Activated T-helper 1 cell treated with anti-CD3 and anti-CD28 coated beads, Interleukin-12 subunit alpha, Interleukin-12 subunit beta, Interleukin-2, Interleukin-4 antibody, amounts not matched to agents 30 ng/mL and 10 ng/mL and 1 ng/mL, durations not matched to agents 14 hours and 24 hours and 36 hours (primary cell): ENCODE measurements at regions of chr9 and their contacts with region 1.

Region 1: DNA sequence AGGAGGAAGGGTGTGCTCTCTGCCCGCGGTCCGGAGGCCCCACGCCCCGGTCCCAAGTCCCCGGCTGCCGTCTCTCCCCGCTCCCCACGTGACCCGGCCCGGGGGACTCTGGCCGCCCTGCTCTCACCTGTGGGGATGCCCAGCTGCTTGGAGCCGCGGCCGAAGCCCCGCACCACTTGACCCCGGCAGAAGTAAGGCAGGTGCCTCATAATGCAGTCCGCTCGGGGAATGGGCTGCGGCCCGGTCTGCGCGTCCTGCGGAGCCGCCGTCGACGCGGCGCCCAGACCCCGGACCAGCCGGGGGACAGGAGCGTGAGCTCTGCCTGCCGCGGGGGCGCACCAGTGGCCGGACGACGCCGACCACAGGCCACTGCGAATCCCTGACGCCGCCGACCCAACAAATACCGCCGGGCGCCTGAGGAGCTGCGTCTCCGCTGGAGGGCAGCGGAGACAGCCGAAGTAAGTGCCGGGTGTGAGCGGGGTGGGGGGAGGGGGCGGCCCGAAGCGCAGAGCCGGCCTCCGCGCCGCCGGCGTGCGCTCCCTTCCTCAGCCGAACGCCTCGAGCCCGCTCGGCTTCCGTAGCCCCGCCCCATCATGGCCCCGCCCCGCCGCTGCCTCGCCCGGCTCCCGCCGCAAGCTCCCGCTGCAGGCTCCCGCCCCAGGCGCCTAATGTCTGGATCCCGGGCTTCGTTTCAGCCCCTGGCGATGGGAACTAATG is at the start of gene RFK:
- DNase-seq: peak; percentile 89
- H3K4me3 Mint-ChIP-seq: peak within 1 kb of the TSS; percentile 97
- H3K27ac Mint-ChIP-seq: peak within 1 kb of the TSS; percentile 99
- H3K4me1 Mint-ChIP-seq: peaks cover 34% of the 10 kb centered on the region
- H3K27me3 Mint-ChIP-seq: no peaks in the 10 kb centered on the region
- total RNA-seq, gene RFK: 20.3 and 20.8 TPM in 2 replicates

Region 2: DNA sequence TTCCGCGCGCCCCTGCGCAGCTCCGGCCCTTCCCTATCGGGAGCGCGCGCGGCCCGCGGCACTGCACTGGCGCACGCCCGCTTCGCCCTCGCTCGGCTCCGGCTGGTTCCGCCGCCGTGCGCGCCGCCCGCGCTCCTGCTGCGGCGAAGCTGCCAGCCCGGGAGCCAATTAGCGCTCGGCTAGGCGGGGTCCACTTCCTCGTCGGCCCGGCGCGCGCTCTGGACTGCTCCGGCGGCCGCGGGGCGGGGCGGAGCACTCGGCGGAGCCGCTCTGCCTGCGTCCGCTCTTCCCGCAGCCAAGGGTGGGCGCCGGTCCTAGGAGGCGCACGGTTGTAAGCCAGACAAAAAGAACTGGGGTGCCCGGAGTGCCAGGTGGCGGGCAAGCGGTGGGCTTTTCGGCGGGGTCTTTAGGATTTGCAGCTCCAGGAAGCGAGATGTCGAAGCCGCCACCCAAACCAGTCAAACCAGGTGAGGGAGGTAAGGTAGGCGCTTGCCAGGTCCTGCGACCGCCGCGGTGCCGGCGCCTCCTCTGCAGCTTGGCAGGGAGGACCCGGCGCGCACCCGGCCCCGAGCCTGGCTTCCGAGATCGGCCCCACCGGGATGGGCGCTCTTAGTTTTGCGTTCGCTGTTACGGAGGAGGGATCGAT is 1305.7 kb before region 1 on chr9 and contains the start of gene OSTF1:
- intact Hi-C with region 1: loop called (anchors 1 kb)
- DNase-seq: peak; percentile 95
- H3K4me3 Mint-ChIP-seq: peak within 1 kb of the TSS; percentile 99
- H3K27ac Mint-ChIP-seq: peak within 1 kb of the TSS; percentile 97
- H3K4me1 Mint-ChIP-seq: peaks cover 64% of the 10 kb centered on the region
- H3K27me3 Mint-ChIP-seq: no peaks in the 10 kb centered on the region
- total RNA-seq, gene OSTF1: 49.5 and 53.6 TPM in 2 replicates

Region 3: GRCh38 chr9:75890472-75891276 is 503.4 kb before region 1 on chr9 and contains the start of gene PCSK5:
- intact Hi-C with region 1: loop called (anchors 5 kb)
- DNase-seq: peak; percentile 81
- H3K4me3 Mint-ChIP-seq: peak within 1 kb of the TSS; percentile 91
- H3K27ac Mint-ChIP-seq: peak within 1 kb of the TSS; percentile 76
- H3K4me1 Mint-ChIP-seq: peaks cover 35% of the 10 kb centered on the region
- H3K27me3 Mint-ChIP-seq: peaks cover 37% of the 10 kb centered on the region
- total RNA-seq, gene PCSK5: 3.3 and 3.7 TPM in 2 replicates

Region 4: DNA sequence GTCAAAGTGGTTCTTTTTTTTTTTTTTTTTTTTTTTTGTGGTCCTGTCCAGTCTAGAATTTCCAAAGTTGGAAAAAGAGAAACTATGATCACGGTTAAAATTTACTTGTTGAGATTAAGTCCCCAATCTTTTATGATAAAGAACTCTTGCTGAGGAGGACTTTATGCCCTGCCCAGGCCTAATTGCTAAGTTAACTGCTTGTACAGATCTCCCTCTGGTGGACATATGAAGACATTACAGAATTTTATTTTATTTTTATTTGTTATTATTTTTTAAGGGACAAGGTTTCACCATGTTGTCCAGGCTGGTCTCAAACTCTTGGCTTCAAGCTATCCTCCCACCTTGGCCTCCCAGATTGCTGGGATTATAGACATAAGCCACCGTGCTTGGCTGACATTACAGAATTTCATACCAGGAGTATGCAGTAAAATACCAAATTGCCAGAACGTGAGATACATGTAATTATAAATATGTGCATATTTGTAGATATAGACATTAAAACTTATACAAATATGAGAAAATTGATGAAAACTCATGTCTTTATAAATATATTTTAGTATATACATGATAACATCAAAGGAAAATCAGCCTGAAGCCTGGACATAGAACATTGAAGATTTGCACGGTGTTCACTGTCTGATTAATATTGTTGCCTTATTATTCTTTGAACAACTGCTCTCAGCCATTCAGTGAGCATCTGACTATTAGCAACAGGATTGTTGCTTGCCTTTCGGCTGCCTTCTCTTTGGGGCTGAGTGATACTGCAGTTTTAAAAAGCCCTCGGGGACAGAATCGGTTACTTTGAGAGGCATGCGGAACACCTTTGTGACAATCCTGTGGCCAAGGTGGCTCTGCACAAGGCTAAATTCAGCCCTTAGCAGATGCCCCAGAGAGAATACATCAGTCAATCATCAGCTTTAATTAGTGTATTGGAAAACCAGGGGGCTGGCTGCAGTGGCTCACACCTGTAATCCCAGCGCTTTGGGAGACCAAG is 90.9 kb before region 1 on chr9:
- intact Hi-C with region 1: no loop called
- DNase-seq: no peak
- H3K4me3 Mint-ChIP-seq: no peak overlapping the region
- H3K27ac Mint-ChIP-seq: no peak overlapping the region
- H3K4me1 Mint-ChIP-seq: no peaks in the 10 kb centered on the region
- H3K27me3 Mint-ChIP-seq: peaks cover 2% of the 10 kb centered on the region

Region 5: DNA sequence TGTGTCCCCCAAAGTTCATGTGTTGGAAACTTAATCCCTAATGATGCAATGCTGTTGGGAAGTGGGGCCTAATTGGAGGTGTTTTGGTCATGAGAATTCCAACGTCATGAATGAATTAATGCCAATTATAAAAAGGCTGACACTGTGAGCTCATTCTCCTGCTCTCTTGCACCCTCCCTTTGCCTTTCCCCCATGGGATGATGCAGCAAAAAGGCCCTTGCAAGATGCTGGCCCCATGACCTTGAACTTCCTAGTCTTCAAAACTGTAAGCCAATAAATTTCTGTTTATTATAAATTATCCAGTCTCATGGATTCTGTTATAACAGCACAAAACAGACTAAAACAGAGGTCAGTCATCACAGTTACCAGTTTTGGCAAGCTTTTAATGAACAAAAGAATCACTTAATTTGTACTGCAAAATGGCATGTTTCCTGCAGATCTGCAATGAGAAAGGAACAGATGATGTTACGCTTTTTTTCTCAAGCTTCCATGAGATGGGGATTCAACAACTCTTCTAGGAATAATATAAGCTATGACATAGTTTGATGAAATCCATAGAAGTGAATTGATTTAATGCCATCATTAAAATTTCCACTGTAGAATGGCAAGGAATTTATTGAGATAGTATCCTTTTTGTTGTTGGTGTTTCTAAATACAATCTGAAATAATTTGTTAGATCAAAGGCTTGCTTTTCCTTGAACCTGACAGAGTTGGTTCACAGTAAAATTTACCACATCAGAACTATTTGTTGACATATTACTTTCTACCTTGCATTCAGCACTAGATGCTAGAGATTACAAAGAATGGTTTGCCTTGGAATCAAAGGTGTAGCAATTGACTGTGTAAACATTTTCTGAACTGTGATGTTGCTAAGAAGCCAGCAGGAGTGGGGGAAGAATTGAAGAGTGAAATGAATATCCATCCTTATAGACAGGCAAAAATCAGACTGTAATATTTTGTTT is 29.4 kb after region 1 on chr9:
- intact Hi-C with region 1: loop called (anchors 2 kb)
- DNase-seq: no peak
- H3K4me3 Mint-ChIP-seq: peak overlapping the region; percentile 28
- H3K27ac Mint-ChIP-seq: peak overlapping the region; percentile 77
- H3K4me1 Mint-ChIP-seq: peaks cover 17% of the 10 kb centered on the region
- H3K27me3 Mint-ChIP-seq: no peaks in the 10 kb centered on the region

Region 6: DNA sequence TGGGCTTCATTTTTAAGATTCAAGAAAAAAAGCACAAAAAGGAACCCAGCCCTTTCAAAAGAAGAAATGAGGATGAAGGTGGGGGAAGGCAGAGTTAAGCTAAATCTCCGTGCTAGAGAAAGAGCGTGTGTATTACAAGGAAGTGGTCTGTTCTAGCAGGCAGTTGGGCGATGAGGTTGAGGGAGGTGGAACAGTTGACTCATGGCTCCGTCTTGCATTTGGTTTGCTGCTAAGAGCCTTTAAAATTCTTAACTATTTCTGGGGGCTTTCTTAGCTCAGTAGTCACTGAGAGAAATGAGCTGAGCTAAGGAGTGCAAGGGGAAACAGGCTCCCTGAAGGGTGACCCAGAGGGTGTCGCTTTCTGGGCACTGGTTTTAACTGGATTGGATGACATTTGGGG is 182.2 kb after region 1 on chr9:
- intact Hi-C with region 1: loop called (anchors 2 kb)
- DNase-seq: peak; percentile 59
- H3K4me3 Mint-ChIP-seq: peak overlapping the region; percentile 25
- H3K27ac Mint-ChIP-seq: peak overlapping the region; percentile 89
- H3K4me1 Mint-ChIP-seq: peaks cover 34% of the 10 kb centered on the region
- H3K27me3 Mint-ChIP-seq: peaks cover 1% of the 10 kb centered on the region

Region 7: GRCh38 chr9:76658535-76659231 is 264.6 kb after region 1 on chr9:
- intact Hi-C with region 1: loop called (anchors 2 kb)
- DNase-seq: no peak
- H3K4me3 Mint-ChIP-seq: no peak overlapping the region
- H3K27ac Mint-ChIP-seq: no peak overlapping the region
- H3K4me1 Mint-ChIP-seq: peaks cover 22% of the 10 kb centered on the region
- H3K27me3 Mint-ChIP-seq: no peaks in the 10 kb centered on the region

Region 8: DNA sequence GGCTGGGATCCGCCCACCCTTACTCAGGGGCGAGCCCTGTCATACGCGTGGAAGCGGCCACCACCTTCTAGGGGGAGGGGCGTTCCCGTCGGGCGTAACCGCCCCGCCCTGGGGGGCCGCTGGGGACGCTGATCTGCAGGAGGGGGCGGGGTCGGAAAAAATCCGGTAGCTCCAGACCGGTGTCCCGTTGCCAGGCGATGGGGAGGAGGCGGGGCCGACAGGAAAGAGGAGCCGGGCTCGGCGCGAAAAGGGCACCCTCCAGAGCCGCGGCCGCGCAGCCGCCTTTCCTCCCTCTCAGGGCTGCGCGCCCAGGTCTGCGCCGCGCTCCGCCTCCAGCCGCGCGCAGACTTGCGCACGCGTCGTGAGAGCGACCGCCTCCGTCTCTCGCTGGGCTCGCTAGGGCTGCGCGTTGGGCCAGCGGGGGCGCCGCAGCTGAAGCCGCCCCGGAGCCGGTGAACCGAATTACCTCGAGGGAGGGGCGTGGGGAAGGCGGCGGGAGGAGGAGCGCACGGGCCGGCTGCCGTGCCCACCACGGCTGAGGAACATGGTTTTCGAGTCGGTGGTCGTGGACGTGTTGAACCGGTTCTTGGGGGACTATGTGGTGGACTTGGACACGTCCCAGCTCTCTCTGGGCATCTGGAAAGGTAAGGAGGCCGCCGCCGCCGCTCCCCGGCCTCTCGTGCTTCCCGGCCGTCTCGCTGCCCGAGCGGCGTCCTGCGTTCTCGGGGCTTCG is 783.2 kb after region 1 on chr9 and contains the start of gene VPS13A:
- intact Hi-C with region 1: loop called (anchors 1 kb)
- DNase-seq: peak; percentile 88
- H3K4me3 Mint-ChIP-seq: peak within 1 kb of the TSS; percentile 95
- H3K27ac Mint-ChIP-seq: peak within 1 kb of the TSS; percentile 92
- H3K4me1 Mint-ChIP-seq: peaks cover 32% of the 10 kb centered on the region
- H3K27me3 Mint-ChIP-seq: peaks cover 13% of the 10 kb centered on the region
- total RNA-seq, gene VPS13A: 43.7 and 44.2 TPM in 2 replicates